ENCODE measurements at regions of chr12 and their contacts with region 1.

Region 1: DNA sequence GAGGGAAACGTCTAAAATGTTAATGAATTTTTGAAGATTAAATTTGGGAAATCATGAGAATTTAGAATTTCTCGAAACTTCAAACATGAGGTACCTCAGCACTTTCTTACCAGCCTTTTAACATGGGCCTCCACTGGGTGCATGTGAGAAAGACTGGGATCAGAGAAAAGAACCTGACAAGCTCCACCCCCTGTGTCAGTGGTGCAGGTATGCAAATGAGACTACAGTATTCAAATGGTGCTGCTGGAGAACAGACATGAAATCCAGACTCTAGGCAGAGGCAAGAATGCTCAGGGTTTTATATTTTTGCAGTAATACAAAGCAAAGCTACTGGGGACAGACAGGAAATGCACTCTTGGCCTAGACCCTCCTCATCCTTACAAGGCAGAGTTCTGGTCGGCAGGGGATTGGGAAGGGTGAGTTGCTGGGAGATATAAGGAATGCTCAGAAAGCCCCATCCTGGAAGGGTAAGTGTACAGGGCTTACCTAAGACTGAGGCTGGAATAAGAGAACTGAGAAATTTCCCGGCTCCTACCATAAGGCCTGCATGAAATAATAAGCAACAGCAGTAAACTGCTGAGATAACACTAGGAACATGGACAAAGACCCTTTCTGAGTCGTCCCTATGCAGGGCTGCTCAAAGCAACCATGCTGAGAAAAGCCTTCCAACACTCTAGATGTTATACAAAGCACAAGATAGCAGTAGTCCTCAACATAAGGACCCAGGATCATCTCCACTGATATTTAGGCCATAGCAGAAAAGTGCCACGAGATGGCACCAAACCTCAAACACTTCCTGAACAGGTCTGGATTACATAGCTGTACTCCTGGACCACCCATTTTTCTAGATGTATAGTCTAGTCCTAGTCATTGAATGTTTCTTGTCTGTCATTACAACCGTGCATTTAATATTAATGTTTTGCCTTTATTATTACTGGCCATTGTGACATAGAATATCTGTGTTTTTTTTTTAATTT is 260.8 kb downstream of the RASSF9 start:
- DNase-seq: peak; percentile 53 to 58
- H3K4me3 ChIP-seq: no peak overlapping the region
- H3K4me3 Mint-ChIP-seq: no peak overlapping the region
- H3K27ac Mint-ChIP-seq: no peak overlapping the region
- H3K4me1 ChIP-seq: no peaks in the 10 kb centered on the region
- H3K4me1 Mint-ChIP-seq: no peaks in the 10 kb centered on the region
- H3K27me3 ChIP-seq: no peaks in the 10 kb centered on the region
- H3K27me3 Mint-ChIP-seq: no peaks in the 10 kb centered on the region
- CTCF ChIP-seq: peak; percentile 58 to 80

Region 2: DNA sequence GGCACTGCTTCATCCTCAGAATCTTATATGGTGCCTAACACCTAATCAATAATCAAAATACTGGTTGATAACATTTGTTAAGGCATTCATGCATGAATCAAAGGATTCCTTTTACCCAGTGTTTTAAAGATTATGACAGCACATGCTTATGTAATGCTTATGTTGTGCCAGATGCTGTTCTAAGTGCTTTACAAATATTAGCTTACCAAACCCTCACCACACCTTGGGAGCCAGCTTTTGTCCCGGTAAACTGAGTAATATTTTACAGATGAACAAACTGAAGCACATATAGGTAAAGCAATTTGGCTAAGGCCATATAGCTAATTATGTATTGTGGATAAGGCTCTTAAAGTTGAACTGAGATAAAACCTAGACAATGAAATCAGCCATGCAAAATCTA is 86.2 kb before region 1 on chr12:
- CTCF ChIA-PET with region 1: no interaction called
- POLR2A ChIA-PET with region 1: no interaction called
- intact Hi-C with region 1: loop called (anchors 5 kb)
- DNase-seq: no peak
- H3K4me3 ChIP-seq: no peak overlapping the region
- H3K4me3 Mint-ChIP-seq: no peak overlapping the region
- H3K27ac Mint-ChIP-seq: no peak overlapping the region
- H3K4me1 ChIP-seq: no peaks in the 10 kb centered on the region
- H3K4me1 Mint-ChIP-seq: no peaks in the 10 kb centered on the region
- H3K27me3 ChIP-seq: no peaks in the 10 kb centered on the region
- H3K27me3 Mint-ChIP-seq: no peaks in the 10 kb centered on the region
- CTCF ChIP-seq: no peak

Region 3: DNA sequence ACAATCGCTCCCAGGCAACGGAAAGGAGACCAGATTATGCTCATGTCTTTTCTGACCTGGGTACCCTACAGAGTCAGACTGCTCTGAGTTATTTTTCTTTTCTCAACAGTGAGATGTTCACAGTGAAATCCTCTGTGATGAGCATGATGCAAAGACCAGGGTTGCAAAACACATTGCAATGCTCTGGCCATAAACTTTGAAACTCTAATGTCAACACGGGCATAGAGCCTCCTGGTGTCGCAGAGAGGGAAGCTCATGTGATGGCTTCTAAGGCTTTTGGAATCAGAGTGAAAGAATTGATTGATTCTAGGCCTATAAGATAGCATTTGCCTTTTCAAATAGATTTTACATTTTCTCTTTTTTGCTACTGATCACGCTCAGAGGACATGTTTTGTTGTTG is 67.4 kb after region 1 on chr12:
- CTCF ChIA-PET with region 1: interaction called, 4 read pairs
- POLR2A ChIA-PET with region 1: no interaction called
- intact Hi-C with region 1: loop called (anchors 1 kb)
- DNase-seq: peak; percentile 47 to 68
- H3K4me3 ChIP-seq: no peak overlapping the region
- H3K4me3 Mint-ChIP-seq: no peak overlapping the region
- H3K27ac Mint-ChIP-seq: no peak overlapping the region
- H3K4me1 ChIP-seq: no peaks in the 10 kb centered on the region
- H3K4me1 Mint-ChIP-seq: no peaks in the 10 kb centered on the region
- H3K27me3 ChIP-seq: no peaks in the 10 kb centered on the region
- H3K27me3 Mint-ChIP-seq: no peaks in the 10 kb centered on the region
- CTCF ChIP-seq: peak; percentile 55 to 70

Region 4: DNA sequence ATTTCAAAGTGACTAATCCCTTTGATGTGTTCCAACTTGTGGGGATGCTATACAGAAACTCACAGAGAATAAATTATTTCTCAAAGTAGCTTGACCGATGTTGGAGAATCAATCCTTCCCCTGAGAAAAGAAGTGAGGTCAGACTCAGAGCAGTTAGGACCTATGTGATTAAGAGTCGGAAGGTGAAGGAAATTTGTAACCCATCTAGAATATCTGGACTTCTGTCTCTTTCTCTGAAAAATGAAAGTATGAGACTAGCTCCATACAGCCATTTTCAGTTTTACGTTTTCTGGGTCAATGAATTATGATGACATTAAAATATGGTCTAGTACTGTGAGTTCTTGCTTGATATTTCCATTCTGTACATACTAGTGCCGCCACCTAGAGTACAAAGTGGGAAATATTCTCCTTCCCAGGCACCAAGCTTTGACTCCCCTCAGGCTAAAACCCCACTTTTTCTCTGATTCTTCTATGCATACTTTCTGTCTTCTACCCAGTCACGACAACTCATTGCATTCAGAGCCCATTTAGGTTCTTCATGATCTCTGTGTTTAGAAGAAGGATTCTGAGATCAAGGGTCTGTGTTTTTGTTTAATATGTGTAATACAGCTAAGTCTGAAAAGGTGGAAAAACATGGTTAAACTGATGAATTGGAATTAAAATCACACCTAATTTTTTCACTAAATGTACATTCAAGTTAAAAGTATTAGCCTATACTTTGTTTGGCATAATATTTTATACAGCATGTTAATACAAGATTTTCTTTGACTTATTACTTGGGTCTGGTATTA is 291.8 kb after region 1 on chr12:
- CTCF ChIA-PET with region 1: interaction called, 15 read pairs
- POLR2A ChIA-PET with region 1: no interaction called
- intact Hi-C with region 1: loop called (anchors 1 kb)
- DNase-seq: peak in 1 of 2 experiments; percentile 58
- H3K4me3 ChIP-seq: no peak overlapping the region
- H3K4me3 Mint-ChIP-seq: no peak overlapping the region
- H3K27ac Mint-ChIP-seq: no peak overlapping the region
- H3K4me1 ChIP-seq: no peaks in the 10 kb centered on the region
- H3K4me1 Mint-ChIP-seq: no peaks in the 10 kb centered on the region
- H3K27me3 ChIP-seq: no peaks in the 10 kb centered on the region
- H3K27me3 Mint-ChIP-seq: peaks cover 10% of the 10 kb centered on the region
- CTCF ChIP-seq: peak; percentile 71 to 75

Region 5: DNA sequence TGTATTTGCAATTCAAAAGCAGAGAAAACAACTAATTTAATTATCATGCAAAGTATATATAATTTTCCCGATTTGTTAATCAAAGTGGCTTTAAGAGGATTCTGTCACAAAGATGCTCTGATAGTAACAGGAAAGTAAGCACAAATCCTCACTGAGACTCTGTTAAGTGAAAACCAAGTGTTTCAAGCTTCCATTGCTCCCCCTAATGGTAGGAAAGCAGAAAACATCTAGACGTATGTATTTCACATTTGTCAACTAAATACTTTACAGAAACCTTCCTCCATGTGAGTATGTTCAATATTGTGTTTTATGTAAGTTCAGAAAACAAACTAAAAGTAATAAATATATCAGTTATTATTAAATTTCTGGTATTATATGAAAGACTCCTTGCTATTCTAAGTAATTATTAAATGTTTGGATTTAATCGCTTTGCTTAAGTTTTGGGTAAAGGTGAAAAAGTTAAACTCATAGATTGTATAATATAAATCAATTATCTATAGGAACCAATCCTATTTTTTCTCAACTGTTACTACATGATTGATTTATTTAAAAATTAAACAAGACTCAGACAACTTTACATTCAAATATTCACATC is 297.2 kb after region 1 on chr12:
- CTCF ChIA-PET with region 1: interaction called, 15 read pairs
- POLR2A ChIA-PET with region 1: no interaction called
- intact Hi-C with region 1: loop called (anchors 1 kb)
- DNase-seq: peak in 1 of 2 experiments; percentile 35
- H3K4me3 ChIP-seq: no peak overlapping the region
- H3K4me3 Mint-ChIP-seq: no peak overlapping the region
- H3K27ac Mint-ChIP-seq: no peak overlapping the region
- H3K4me1 ChIP-seq: no peaks in the 10 kb centered on the region
- H3K4me1 Mint-ChIP-seq: no peaks in the 10 kb centered on the region
- H3K27me3 ChIP-seq: no peaks in the 10 kb centered on the region
- H3K27me3 Mint-ChIP-seq: peaks cover 6% of the 10 kb centered on the region
- CTCF ChIP-seq: peak; percentile 72 to 73

Region 6: GRCh38 chr12:85920324-85920947 is 345.0 kb after region 1 on chr12:
- CTCF ChIA-PET with region 1: interaction called, 3 read pairs
- POLR2A ChIA-PET with region 1: no interaction called
- intact Hi-C with region 1: loop called (anchors 1 kb)
- DNase-seq: no peak
- H3K4me3 ChIP-seq: no peak overlapping the region
- H3K4me3 Mint-ChIP-seq: no peak overlapping the region
- H3K27ac Mint-ChIP-seq: no peak overlapping the region
- H3K4me1 ChIP-seq: no peaks in the 10 kb centered on the region
- H3K4me1 Mint-ChIP-seq: no peaks in the 10 kb centered on the region
- H3K27me3 ChIP-seq: no peaks in the 10 kb centered on the region
- H3K27me3 Mint-ChIP-seq: no peaks in the 10 kb centered on the region
- CTCF ChIP-seq: peak; percentile 36 to 61